Heart right ventricle (tissue), 16 donors: ENCODE measurements at regions of chr11 and their contacts with region 1.

Region 1: GRCh38 chr11:12587333-12587991 is 86.8 kb upstream of the TEAD1 start:
- DNase-seq: no peak
- ATAC-seq: no peak
- H3K4me3 ChIP-seq: no peak overlapping the region
- H3K27ac ChIP-seq: no peak overlapping the region
- H3K4me1 ChIP-seq: peaks cover 0 to 19% (median 13%) of the 10 kb centered on the region in 9 donors
- H3K27me3 ChIP-seq: no peaks in the 10 kb centered on the region
- CTCF ChIP-seq: no peak

Region 2: DNA sequence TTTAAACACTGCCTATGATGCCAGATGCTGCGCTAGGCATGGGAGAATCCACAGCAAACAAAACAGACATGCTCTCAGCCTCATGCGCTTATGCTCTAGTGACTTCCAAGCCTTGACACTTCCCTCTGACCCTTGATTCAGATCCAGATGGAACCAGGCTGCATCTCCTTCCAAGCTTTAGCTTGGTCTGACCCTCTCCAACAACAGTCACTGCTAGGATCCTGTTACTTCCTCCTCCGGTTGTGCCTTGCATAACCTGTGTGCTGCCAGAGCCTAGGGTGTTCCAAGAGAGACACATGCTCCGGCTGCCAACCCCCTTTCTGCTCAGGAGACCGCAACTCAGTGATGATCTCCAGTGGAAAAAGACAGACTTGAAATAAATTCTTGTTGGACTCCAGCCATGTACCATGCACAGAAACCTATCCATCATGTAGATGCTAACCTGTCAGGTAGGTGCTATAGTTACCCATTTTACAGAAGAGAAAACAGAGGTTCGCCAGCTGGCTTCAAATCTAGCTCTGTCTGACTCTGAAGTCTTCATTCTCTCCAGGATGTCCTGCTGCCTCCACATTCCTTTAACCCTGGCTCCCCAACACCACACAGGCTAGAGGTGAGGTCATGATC is 49.6 kb before region 1 on chr11:
- intact Hi-C with region 1: no loop called
- DNase-seq: no peak
- ATAC-seq: peak in 3 of 8 donors; percentile 25 to 48 (median 34)
- H3K4me3 ChIP-seq: no peak overlapping the region
- H3K27ac ChIP-seq: no peak overlapping the region
- H3K4me1 ChIP-seq: peaks cover 0 to 18% (median 11%) of the 10 kb centered on the region in 9 donors
- H3K27me3 ChIP-seq: no peaks in the 10 kb centered on the region
- CTCF ChIP-seq: no peak

Region 3: DNA sequence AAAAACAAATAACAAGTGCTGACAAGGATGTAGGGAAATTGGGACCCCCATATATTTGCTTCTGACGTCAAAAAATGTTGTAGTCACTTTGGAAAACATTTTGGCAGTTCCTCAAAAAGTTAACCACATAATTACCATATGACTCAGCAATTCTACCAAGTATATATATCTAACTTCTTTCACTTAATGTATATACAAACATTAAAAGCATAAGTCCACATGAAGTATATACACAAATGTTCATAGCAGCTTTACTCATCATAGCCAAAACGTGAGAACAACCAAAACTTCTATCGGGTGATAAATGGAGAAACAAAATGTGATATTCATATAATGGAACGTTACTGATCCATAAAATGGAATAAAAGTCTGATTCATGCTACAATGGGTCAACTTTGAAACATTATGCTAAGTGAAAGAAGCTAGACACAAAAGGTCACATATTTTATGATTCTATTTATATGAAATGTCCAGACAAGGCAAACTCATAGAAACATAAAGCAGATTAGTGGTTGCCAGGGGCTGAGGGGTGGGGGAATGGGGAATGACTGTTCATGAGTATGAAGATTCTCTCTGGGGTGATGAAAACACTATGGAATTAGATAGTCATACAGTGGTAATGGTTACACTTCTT is 38.1 kb after region 1 on chr11:
- intact Hi-C with region 1: no loop called
- DNase-seq: no peak
- ATAC-seq: no peak
- H3K4me3 ChIP-seq: no peak overlapping the region
- H3K27ac ChIP-seq: no peak overlapping the region
- H3K4me1 ChIP-seq: no peaks in the 10 kb centered on the region
- H3K27me3 ChIP-seq: no peaks in the 10 kb centered on the region
- CTCF ChIP-seq: no peak

Region 4: GRCh38 chr11:12864316-12865156 is 277.1 kb after region 1 on chr11:
- intact Hi-C with region 1: loop called in 1 of 10 experiments (anchors 5 kb)
- DNase-seq: no peak
- ATAC-seq: peak in 4 of 8 donors; percentile 13 to 59 (median 44)
- H3K4me3 ChIP-seq: peak overlapping the region in 3 of 10 donors; percentile 1 to 28 (median 26)
- H3K27ac ChIP-seq: no peak overlapping the region
- H3K4me1 ChIP-seq: peaks cover 3 to 63% (median 35%) of the 10 kb centered on the region in 9 donors
- H3K27me3 ChIP-seq: peaks cover 0 to 14% (median 0%) of the 10 kb centered on the region in 7 donors
- CTCF ChIP-seq: no peak